ENCODE measurements at regions of chr3 and their contacts with region 1.

Region 1: GRCh38 chr3:186617038-186617946 is 4.4 kb downstream of the AHSG start:
- DNase-seq: peak; percentile 88 to 93 (median 92)
- ATAC-seq: peak; percentile 92 to 96
- H3K4me3 ChIP-seq: no peak overlapping the region
- H3K27ac ChIP-seq: no peak overlapping the region
- H3K4me1 ChIP-seq: peaks cover 3% of the 10 kb centered on the region
- H3K27me3 ChIP-seq: no peaks in the 10 kb centered on the region

Region 2: DNA sequence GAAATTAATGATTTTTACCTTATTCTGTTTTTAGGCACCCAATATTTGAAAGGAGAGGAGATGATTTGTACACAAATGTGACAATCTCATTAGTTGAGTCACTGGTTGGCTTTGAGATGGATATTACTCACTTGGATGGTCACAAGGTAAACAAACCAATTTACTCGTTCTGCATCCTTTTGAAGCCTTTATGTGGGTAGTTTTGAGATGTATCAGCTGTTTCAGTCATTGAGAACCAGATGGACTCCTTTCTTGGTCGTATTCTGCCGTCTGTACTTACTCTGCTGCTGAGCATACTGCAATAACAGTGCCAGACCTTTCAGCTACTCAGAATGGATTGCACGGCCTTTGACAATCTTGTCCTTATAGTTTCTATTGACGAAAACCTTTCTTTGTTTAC is 33.5 kb before region 1 on chr3:
- intact Hi-C with region 1: no loop called
- DNase-seq: no peak
- ATAC-seq: no peak
- H3K4me3 ChIP-seq: no peak overlapping the region
- H3K27ac ChIP-seq: no peak overlapping the region
- H3K4me1 ChIP-seq: no peaks in the 10 kb centered on the region
- H3K27me3 ChIP-seq: no peaks in the 10 kb centered on the region

Region 3: DNA sequence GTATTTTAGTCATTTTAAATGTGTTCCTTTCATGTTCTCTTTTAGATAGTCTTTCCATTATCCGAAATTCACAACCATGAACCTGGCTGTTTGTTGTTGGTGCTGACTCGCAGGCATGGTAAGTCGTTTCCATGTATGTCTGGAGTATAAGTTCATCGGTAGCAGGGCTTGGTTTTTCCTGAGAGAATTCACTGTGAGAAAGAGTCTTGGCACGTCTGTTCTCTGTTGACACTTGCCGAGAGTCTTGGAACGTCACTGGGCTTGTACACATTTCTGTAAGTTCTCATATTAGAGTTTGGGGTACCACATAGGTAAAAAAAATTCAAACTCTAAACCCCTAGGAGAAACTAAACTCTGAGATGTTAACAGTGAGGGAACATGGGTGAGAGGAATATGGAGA is 136.7 kb after region 1 on chr3:
- intact Hi-C with region 1: loop called (anchors 5 to 10 kb)
- DNase-seq: no peak
- ATAC-seq: no peak
- H3K4me3 ChIP-seq: no peak overlapping the region
- H3K27ac ChIP-seq: no peak overlapping the region
- H3K4me1 ChIP-seq: no peaks in the 10 kb centered on the region
- H3K27me3 ChIP-seq: no peaks in the 10 kb centered on the region

Region 4: GRCh38 chr3:186759231-186759930 is 142.1 kb after region 1 on chr3:
- intact Hi-C with region 1: loop called (anchors 5 to 10 kb)
- DNase-seq: no peak
- ATAC-seq: no peak
- H3K4me3 ChIP-seq: no peak overlapping the region
- H3K27ac ChIP-seq: no peak overlapping the region
- H3K4me1 ChIP-seq: no peaks in the 10 kb centered on the region
- H3K27me3 ChIP-seq: no peaks in the 10 kb centered on the region

Region 5: DNA sequence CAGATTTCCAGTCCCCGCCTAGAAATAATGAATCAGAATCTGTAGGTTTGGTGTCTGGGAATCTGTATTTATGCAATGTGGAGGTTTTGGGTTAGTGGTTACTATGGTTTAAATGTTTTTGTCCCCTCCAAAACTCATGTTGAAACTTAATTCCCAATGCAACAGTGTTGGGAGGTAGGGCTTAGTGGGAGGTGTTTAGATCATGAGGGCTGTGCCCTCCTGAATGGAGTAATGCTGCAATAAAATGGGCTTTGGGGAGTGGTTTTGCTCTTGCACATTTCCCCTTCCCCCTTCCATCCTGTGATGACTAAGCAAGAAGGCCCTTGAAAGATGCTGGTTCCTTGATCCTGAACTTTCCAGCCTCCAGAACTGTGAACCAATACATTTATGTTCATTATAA is 198.1 kb after region 1 on chr3:
- intact Hi-C with region 1: loop called in 3 of 4 experiments (anchors 5 to 10 kb)
- DNase-seq: no peak
- ATAC-seq: no peak
- H3K4me3 ChIP-seq: no peak overlapping the region
- H3K27ac ChIP-seq: no peak overlapping the region
- H3K4me1 ChIP-seq: no peaks in the 10 kb centered on the region
- H3K27me3 ChIP-seq: no peaks in the 10 kb centered on the region

Region 6: GRCh38 chr3:186821429-186822367 is 204.4 kb after region 1 on chr3:
- intact Hi-C with region 1: loop called in 3 of 4 experiments (anchors 5 to 10 kb)
- DNase-seq: no peak
- ATAC-seq: peak in 1 of 2 donors; percentile 23
- H3K4me3 ChIP-seq: no peak overlapping the region
- H3K27ac ChIP-seq: no peak overlapping the region
- H3K4me1 ChIP-seq: no peaks in the 10 kb centered on the region
- H3K27me3 ChIP-seq: no peaks in the 10 kb centered on the region

Region 7: GRCh38 chr3:186831798-186832197 is 214.5 kb after region 1 on chr3:
- intact Hi-C with region 1: no loop called
- DNase-seq: no peak
- ATAC-seq: no peak
- H3K4me3 ChIP-seq: no peak overlapping the region
- H3K27ac ChIP-seq: no peak overlapping the region
- H3K4me1 ChIP-seq: no peaks in the 10 kb centered on the region
- H3K27me3 ChIP-seq: peaks cover 2% of the 10 kb centered on the region

Region 8: DNA sequence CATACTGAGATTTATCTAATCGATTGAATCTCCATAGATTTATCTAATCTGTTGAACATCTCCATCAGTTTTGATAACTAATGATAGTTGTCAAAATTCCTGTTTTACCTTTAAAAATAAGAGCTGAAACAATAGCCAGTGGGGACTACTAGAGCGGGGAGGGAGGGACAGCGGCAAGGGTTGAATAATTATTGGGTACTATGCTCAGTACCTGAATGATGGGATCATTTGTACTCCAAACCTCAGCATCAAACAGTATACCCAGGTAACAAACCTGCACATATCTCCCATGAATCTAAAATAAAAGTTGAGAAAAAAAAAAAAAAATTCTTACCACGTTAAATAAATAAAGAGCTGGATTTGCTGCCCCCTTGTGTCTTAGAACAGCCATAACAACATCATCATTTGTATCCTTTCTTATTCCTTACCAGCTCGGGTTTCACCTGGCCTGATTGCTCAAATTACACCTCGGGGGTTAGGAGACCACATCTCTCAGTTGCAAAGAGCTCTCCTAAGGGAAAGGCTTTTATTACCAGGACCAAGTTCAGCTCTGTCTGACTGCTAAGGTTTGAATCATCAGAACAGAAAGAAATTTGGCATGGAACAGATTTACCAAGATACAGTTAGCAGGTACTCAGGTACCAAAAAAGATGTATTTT is 547.7 kb after region 1 on chr3:
- intact Hi-C with region 1: loop called in 1 of 4 experiments (anchors 5 kb)
- DNase-seq: no peak
- ATAC-seq: peak; percentile 43 to 45
- H3K4me3 ChIP-seq: no peak overlapping the region
- H3K27ac ChIP-seq: no peak overlapping the region
- H3K4me1 ChIP-seq: no peaks in the 10 kb centered on the region
- H3K27me3 ChIP-seq: no peaks in the 10 kb centered on the region